ENCODE measurements at regions of chr3 and their contacts with region 1.

Region 1: GRCh38 chr3:96863129-96863740 is 48.8 kb downstream of the EPHA6 start:
- ATAC-seq: peak in 3 of 8 experiments; percentile 37 to 60 (median 42)
- H3K4me3 ChIP-seq: no peak overlapping the region
- H3K27ac ChIP-seq: no peak overlapping the region
- H3K4me1 ChIP-seq: no peaks in the 10 kb centered on the region

Region 2: GRCh38 chr3:96631050-96631449 is 232.2 kb before region 1 on chr3:
- in situ Hi-C with region 1: no loop called
- ATAC-seq: no peak
- H3K4me3 ChIP-seq: no peak overlapping the region
- H3K27ac ChIP-seq: no peak overlapping the region
- H3K4me1 ChIP-seq: no peaks in the 10 kb centered on the region

Region 3: DNA sequence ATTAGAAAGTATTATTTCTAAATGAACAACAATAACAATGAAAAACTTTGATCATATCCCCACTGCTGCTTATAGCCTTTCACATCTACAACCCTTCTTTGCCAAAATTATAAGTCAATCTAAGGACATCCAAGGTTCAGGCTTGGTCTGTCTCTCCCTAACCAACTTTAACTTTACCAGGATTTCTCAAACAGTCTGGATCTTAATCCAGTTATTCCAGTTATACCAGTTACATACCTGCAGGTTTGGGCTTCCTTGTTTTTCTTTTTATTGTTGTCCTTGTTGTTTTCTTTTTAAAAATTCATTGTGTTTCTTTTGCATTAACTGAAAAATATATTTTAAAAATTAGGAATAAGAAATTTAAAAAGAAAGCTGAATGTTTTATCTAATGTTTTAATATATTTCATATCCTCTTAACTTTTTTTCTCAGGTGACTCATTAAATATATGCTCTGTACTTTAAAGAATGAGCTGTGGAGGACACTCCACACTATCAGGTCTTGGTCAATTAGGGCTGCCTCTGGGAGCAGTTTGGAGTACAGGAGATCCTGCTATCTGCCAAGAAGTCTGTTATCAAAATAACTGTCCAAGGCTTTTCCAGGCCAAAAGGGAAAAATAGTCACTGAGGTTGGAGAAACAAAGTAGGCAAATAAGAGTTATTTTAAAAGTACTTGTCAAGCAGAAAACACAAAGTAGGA is 372.5 kb after region 1 on chr3:
- in situ Hi-C with region 1: no loop called
- ATAC-seq: no peak
- H3K4me3 ChIP-seq: no peak overlapping the region
- H3K27ac ChIP-seq: no peak overlapping the region
- H3K4me1 ChIP-seq: no peaks in the 10 kb centered on the region

Region 4: DNA sequence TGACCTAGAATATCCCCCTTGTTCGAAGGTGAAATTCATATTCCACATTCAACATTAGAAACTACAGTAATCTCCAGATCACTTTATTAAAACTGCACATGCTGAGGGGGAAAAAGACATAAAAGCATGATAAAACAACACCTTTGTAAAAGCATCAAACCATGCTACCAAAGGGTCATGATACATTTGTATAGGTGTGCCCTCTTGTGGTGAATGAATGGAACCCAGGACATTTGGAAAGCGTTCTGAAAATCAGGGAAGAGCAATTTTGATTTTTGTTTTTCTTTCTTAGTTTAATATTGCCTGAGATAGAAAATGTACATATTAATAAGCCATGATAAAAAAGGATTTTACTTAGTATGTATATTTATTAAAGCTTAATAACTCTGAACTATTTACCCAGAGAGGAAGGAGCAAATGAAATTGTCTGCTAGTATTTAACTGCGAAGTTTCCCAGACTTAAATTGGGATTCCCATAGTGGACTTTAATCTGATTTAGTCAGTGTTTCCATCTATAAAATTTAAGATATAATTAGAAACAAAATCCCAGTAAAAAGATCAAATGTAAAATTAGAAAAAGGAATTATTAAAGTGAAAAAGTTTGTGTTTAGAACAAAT is 795.5 kb after region 1 on chr3:
- in situ Hi-C with region 1: loop called in 1 of 9 experiments (anchors 25 kb)
- ATAC-seq: peak in 5 of 8 experiments; percentile 20 to 52 (median 44)
- H3K4me3 ChIP-seq: no peak overlapping the region
- H3K27ac ChIP-seq: no peak overlapping the region
- H3K4me1 ChIP-seq: peaks cover 0 to 6% of the 10 kb centered on the region in 2 donors

Region 5: GRCh38 chr3:97719156-97719821 is 856.1 kb after region 1 on chr3:
- in situ Hi-C with region 1: loop called in 2 of 9 experiments (anchors 25 kb)
- ATAC-seq: peak; percentile 56 to 93 (median 77)
- H3K4me3 ChIP-seq: no peak overlapping the region
- H3K27ac ChIP-seq: no peak overlapping the region
- H3K4me1 ChIP-seq: no peaks in the 10 kb centered on the region

Region 6: DNA sequence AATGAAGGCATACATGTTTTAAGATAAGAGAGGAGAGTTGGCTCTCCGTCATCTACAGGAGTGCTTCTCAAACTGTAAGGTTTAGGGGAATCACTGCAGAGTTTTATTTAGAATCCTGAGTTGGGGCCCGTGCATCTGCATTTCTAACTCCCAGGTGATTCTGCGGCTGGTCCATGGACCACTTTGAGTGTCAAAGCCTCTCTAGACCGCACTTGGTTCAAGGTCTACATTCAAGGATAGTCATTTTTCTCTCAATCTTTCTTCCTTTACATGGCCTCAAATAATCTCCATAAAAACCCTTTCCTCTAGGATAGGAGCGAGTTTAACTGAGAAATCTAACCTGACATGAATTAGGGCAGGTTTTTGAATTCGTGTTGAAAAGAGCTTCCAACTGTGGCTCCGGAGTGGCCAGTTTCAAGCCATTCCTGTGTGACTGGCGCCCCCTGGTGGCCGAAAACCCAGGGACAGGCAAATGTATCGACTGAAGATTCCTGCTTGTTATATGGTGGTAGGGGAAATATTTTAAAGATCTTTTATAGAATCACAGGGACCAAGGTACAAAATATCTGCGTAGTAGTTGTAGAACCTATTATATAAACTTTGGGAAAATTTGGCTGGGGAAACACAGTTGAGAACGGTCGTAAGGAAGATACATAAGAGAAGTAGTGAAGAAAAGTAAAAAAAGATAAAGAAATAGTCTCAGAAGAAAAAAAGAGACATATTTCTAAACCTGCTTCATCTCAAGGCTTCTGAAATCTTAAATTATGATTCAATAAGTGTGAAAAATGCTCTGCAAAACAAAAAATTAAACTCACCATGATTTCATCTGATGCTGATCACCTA is 1160.0 kb after region 1 on chr3:
- in situ Hi-C with region 1: loop called in 1 of 9 experiments (anchors 25 kb)
- ATAC-seq: peak; percentile 71 to 91 (median 82)
- H3K4me3 ChIP-seq: no peak overlapping the region
- H3K27ac ChIP-seq: no peak overlapping the region
- H3K4me1 ChIP-seq: peaks cover 0 to 10% of the 10 kb centered on the region in 2 donors

Measured in motor neuron (in vitro differentiated cells).